Left ventricle myocardium inferior (tissue), 1 donor: ENCODE measurements at regions of chr5 and their contacts with region 1.

Region 1: DNA sequence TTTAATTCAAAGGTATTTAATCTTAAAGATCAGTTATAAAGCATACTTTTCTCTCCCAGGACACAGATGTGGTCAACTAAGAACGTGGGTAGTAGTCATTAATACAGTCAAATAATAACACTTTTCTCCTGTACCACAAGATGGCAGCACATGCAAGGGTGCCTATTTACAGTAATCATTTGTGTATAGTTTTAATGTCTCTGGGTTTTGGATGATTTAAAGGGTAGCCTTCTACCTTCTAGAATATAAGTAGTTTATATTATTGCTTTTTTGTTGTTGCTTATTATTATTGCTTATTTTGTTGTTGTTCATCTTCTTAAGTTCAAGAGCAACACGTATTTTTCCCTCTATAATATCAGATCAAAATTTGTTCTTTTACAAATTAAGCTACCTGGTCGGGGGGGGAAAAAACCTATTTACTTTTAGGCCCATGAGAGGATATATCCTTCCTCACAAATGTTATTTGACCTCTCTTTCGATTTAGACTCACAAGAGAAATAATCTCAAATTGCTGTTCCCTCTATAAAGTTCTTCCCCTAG is 59.6 kb upstream of the SLC27A6 start:
- DNase-seq: no peak
- H3K4me3 ChIP-seq: no peak overlapping the region
- H3K27ac ChIP-seq: no peak overlapping the region
- H3K4me1 ChIP-seq: no peaks in the 10 kb centered on the region
- H3K27me3 ChIP-seq: no peaks in the 10 kb centered on the region
- CTCF ChIP-seq: peak; percentile 89

Region 2: DNA sequence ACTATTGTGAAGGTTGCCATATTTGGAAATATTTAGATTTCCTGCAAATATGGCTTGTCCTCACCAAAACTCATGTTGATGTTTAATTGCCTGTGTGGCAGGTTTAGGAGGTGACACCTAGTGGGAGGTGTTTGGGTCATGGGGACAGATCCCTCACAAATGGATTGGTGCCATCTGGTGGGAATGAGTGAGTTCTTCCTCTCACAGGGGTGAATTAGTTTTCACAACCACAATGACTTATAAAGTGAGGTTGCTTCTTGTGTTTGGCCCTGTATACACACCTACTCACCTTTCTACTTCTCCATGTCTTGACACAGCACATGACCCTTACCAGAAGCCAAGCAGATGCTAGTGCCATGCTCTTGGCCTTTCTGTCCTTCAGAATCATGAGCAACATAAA is 230.0 kb after region 1 on chr5:
- intact Hi-C with region 1: loop called (anchors 10 kb)
- DNase-seq: no peak
- H3K4me3 ChIP-seq: no peak overlapping the region
- H3K27ac ChIP-seq: no peak overlapping the region
- H3K4me1 ChIP-seq: peaks cover 3% of the 10 kb centered on the region
- H3K27me3 ChIP-seq: no peaks in the 10 kb centered on the region
- CTCF ChIP-seq: peak; percentile 16

Region 3: GRCh38 chr5:129767906-129768380 is 862.3 kb after region 1 on chr5:
- intact Hi-C with region 1: loop called (anchors 10 kb)
- DNase-seq: peak; percentile 15
- H3K4me3 ChIP-seq: no peak overlapping the region
- H3K27ac ChIP-seq: no peak overlapping the region
- H3K4me1 ChIP-seq: no peaks in the 10 kb centered on the region
- H3K27me3 ChIP-seq: no peaks in the 10 kb centered on the region
- CTCF ChIP-seq: peak; percentile 98